Heart left ventricle (tissue), 16 donors: ENCODE measurements at regions of chr7 and their contacts with region 1.

Region 1: DNA sequence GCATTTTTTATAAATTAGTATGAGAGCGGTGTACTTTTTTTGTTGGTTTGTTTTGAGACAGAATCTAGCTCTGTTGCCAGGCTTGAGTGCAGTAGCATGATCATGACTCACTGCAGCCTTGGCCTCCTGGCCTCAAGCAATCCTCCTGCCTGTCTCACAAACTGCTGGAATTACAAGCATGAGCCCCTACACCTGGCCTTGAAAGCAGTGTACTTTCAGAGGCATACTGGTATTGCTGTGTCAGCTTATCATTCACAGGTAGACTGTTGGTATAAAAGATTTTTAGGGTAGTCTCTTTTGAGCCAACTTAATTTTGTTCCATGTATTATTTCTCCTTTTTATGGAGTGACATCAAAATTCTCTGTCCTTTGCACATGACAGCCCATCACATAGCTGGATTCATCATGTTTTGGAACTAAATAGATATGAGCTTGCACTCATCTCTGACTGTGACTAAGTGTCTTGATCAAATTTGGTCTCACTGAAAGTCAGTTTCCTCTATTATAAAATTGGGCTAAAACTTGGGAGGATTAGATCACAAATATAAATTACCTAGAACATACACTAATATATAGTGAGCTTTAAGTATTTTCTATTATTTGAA is 12.4 kb downstream of the GNAT3 start:
- DNase-seq: peak in 4 of 5 donors; percentile 36 to 72 (median 40)
- ATAC-seq: peak; percentile 80 to 93 (median 84)
- H3K4me3 ChIP-seq: no peak overlapping the region
- H3K27ac ChIP-seq: peak overlapping the region; percentile 18 to 83 (median 70)
- H3K4me1 ChIP-seq: peaks cover 3 to 42% (median 26%) of the 10 kb centered on the region in 12 donors
- H3K27me3 ChIP-seq: no peaks in the 10 kb centered on the region
- CTCF ChIP-seq: no peak
- POLR2A ChIP-seq: no peak

Region 2: GRCh38 chr7:80533287-80533686 is 33.8 kb after region 1 on chr7:
- intact Hi-C with region 1: no loop called
- DNase-seq: no peak
- ATAC-seq: no peak
- H3K4me3 ChIP-seq: no peak overlapping the region
- H3K27ac ChIP-seq: no peak overlapping the region
- H3K4me1 ChIP-seq: peaks cover 0 to 9% (median 1%) of the 10 kb centered on the region in 12 donors
- H3K27me3 ChIP-seq: no peaks in the 10 kb centered on the region
- CTCF ChIP-seq: no peak
- POLR2A ChIP-seq: no peak

Region 3: GRCh38 chr7:80552304-80552703 is 52.9 kb after region 1 on chr7:
- intact Hi-C with region 1: loop called in 1 of 10 experiments (anchors 2 kb)
- DNase-seq: no peak
- ATAC-seq: no peak
- H3K4me3 ChIP-seq: no peak overlapping the region
- H3K27ac ChIP-seq: peak overlapping the region in 8 of 12 donors; percentile 19 to 78 (median 50)
- H3K4me1 ChIP-seq: peaks cover 7 to 45% (median 31%) of the 10 kb centered on the region in 12 donors
- H3K27me3 ChIP-seq: no peaks in the 10 kb centered on the region
- CTCF ChIP-seq: no peak
- POLR2A ChIP-seq: no peak